ENCODE measurements at regions of chr15 and their contacts with region 1.

Region 1: DNA sequence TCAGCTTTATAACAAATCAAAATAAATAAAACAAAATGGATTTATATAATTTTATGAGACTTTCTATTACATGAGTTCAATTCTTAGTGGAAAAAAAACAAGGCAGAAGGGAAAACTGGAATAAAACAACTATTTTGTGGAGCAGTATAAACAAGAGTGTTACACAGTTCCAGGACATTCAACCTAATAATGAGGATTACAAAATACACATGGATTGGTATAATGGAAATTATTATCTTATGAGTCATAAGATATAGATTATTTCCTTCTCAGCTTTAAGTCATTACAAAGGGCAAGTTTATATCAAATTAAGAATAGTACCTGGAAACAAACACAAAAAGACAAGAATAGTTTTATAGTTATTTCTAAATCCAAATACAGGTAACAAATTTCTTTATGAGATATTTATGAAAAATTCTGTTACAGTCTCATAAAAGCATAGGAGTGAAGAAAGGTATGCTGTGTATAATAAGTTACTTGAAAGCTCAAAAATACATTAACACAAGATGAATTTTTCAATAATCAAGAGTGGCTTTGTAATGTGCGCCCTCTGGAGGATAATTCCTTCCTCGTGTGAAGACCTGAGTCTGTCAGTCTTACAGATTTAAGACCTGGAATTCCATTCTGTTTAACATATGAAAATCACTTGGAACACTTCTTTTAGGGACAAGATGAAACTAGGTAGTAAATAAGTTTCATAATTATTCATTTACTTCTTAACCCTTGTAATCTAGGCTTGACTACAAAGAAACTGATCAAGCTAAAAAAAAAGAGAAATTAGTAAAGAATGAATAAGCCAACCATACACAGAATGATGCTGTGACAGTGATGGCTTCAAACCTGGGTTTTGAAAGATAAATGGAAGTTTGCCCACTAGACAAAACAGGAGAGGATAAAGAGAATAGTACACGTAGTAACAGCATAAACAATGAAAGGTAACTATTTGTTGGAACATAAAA is 9.5 kb downstream of the COPS2 start:
- DNase-seq: no peak

Region 2: GRCh38 chr15:48794697-48795134 is 351.2 kb before region 1 on chr15:
- intact Hi-C with region 1: no loop called
- DNase-seq: no peak

Region 3: GRCh38 chr15:48868536-48868935 is 277.4 kb before region 1 on chr15:
- intact Hi-C with region 1: loop called (anchors 5 kb)
- DNase-seq: no peak

Region 4: GRCh38 chr15:48975472-48976419 is 170.2 kb before region 1 on chr15:
- intact Hi-C with region 1: no loop called
- DNase-seq: peak; percentile 88

Measured in cardiac septum (tissue), 1 donor.